ENCODE measurements at regions of chr10 and their contacts with region 1.

Region 1: GRCh38 chr10:117167789-117168674 is 29.3 kb upstream of the KCNK18 start:
- DNase-seq: peak; percentile 61 to 80 (median 77)
- H3K4me3 ChIP-seq: peak overlapping the region in 4 of 7 experiments; percentile 35 to 60 (median 46)
- H3K27ac ChIP-seq: no peak overlapping the region
- H3K4me1 ChIP-seq: peaks cover 0 to 31% (median 11%) of the 10 kb centered on the region in 4 experiments
- H3K27me3 ChIP-seq: peaks cover 37 to 100% (median 76%) of the 10 kb centered on the region in 5 experiments

Region 2: DNA sequence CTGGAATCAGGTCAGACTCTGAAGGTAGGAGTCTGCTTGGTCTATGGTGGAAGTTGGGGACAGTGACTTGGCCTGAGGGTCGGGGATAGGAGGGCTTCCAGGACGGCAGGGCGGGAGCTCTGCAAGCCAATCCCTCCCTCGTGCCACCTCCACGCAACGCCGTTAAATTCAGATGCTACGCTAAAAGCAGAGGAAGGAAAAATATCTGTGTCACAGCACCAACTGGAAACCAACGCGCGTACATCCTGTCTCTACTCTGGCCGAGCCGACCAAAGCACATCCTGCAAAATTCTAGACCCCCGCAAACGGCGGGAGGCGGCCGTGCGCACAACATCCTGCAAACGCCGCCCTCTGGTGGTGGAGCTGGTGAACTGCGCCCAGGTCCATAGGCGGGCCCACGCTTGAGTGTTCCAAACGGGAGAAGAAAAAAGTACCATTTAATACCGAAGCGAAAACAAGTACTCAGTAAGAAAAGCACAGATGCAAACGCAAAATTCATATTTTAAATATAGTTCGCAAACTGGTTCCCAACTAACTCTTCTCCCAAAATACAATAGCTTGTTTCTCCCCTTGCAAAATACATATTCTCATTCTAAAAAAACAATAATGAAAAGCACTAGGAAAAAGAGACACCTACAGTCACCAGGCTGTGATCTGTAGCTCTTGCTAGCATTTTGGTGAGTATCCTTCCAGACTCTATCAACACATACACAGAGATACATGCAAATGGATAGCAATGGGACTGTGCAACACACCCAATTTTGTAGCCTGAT is 380.0 kb before region 1 on chr10:
- CTCF ChIA-PET with region 1: interaction called, 20 read pairs
- POLR2A ChIA-PET with region 1: no interaction called
- DNase-seq: peak; percentile 83 to 88 (median 87)
- H3K4me3 ChIP-seq: peak overlapping the region in 5 of 7 experiments; percentile 30 to 70 (median 38)
- H3K27ac ChIP-seq: no peak overlapping the region
- H3K4me1 ChIP-seq: peaks cover 0 to 5% (median 2%) of the 10 kb centered on the region in 4 experiments
- H3K27me3 ChIP-seq: peaks cover 0 to 6% (median 0%) of the 10 kb centered on the region in 5 experiments

Region 3: DNA sequence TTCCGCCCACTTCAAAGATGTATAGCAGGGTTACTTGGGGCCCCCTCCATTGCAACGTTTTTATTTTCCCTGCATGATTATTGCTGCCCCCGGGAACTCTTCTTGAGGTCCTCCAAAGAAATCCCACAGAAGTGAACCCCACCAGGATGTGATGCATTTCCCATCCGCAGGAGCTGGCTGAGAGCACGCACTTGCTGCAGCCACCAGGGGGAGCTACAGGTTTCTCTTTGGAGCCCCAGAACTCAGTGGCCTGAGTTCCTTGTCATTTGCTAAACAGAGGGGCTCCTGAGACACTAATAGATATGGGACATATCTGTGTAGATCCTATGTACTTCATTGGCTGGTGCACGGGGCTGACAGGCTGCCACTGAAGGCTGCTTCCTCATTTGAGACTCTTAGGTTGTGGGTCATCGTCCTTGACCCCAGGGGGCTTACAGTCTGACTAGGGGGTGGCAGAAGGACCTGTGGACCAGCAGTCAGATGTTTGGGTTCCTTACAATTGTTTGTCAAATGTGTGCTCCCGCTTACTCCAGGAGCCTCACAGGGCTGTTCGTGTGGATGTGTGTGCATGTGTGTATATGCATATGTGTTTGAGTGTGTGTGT is 371.0 kb before region 1 on chr10:
- CTCF ChIA-PET with region 1: interaction called, 107 read pairs
- POLR2A ChIA-PET with region 1: no interaction called
- DNase-seq: peak; percentile 74 to 85 (median 82)
- H3K4me3 ChIP-seq: no peak overlapping the region
- H3K27ac ChIP-seq: no peak overlapping the region
- H3K4me1 ChIP-seq: no peaks in the 10 kb centered on the region
- H3K27me3 ChIP-seq: peaks cover 3 to 14% (median 8%) of the 10 kb centered on the region in 5 experiments

Region 4: GRCh38 chr10:116836902-116837523 is 331.0 kb before region 1 on chr10:
- CTCF ChIA-PET with region 1: interaction called, 23 read pairs
- POLR2A ChIA-PET with region 1: no interaction called
- DNase-seq: peak in 1 of 3 donors; percentile 17
- H3K4me3 ChIP-seq: no peak overlapping the region
- H3K27ac ChIP-seq: no peak overlapping the region
- H3K4me1 ChIP-seq: no peaks in the 10 kb centered on the region
- H3K27me3 ChIP-seq: peaks cover 0 to 2% (median 0%) of the 10 kb centered on the region in 5 experiments

Region 5: DNA sequence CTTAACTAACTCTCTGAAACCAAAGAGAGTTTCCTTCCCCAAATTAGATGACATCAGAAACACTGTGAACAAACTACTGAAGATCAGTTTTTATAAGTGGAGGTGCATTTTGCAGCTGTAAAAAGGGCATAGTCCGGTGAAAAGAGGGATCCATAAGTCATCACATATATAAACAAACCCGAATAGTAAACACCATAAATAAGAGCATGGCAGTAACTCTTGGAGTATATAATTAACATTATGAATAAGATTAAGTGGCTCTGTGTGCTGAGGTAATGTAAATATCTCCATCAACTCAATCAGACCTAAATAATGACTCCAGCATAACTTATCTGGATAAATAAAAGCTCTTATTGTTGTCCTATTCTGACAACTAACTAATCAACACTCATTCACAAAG is 120.1 kb before region 1 on chr10:
- CTCF ChIA-PET with region 1: no interaction called
- POLR2A ChIA-PET with region 1: no interaction called
- DNase-seq: no peak
- H3K4me3 ChIP-seq: no peak overlapping the region
- H3K27ac ChIP-seq: no peak overlapping the region
- H3K4me1 ChIP-seq: no peaks in the 10 kb centered on the region
- H3K27me3 ChIP-seq: no peaks in the 10 kb centered on the region

Region 6: GRCh38 chr10:117131376-117132327 is 36.4 kb before region 1 on chr10:
- CTCF ChIA-PET with region 1: interaction called, 21 read pairs
- POLR2A ChIA-PET with region 1: no interaction called
- DNase-seq: peak in 2 of 3 donors; percentile 31 to 36
- H3K4me3 ChIP-seq: peak overlapping the region in 2 of 7 experiments; percentile 1 to 37
- H3K27ac ChIP-seq: no peak overlapping the region
- H3K4me1 ChIP-seq: peaks cover 0 to 28% (median 17%) of the 10 kb centered on the region in 4 experiments
- H3K27me3 ChIP-seq: peaks cover 42 to 97% (median 67%) of the 10 kb centered on the region in 5 experiments

Region 7: GRCh38 chr10:117137031-117137910 is 30.8 kb before region 1 on chr10:
- CTCF ChIA-PET with region 1: interaction called, 12 read pairs
- POLR2A ChIA-PET with region 1: no interaction called
- DNase-seq: peak in 2 of 3 donors; percentile 40 to 55
- H3K4me3 ChIP-seq: peak overlapping the region in 4 of 7 experiments; percentile 13 to 58 (median 46)
- H3K27ac ChIP-seq: no peak overlapping the region
- H3K4me1 ChIP-seq: peaks cover 0 to 39% (median 22%) of the 10 kb centered on the region in 4 experiments
- H3K27me3 ChIP-seq: peaks cover 18 to 97% (median 57%) of the 10 kb centered on the region in 5 experiments

Region 8: GRCh38 chr10:117148284-117148683 is 19.7 kb before region 1 on chr10:
- CTCF ChIA-PET with region 1: interaction called, 11 read pairs
- POLR2A ChIA-PET with region 1: no interaction called
- DNase-seq: no peak
- H3K4me3 ChIP-seq: no peak overlapping the region
- H3K27ac ChIP-seq: no peak overlapping the region
- H3K4me1 ChIP-seq: no peaks in the 10 kb centered on the region
- H3K27me3 ChIP-seq: peaks cover 11 to 92% (median 34%) of the 10 kb centered on the region in 5 experiments